ENCODE measurements at regions of chr1 and their contacts with region 1.

Region 1: GRCh38 chr1:19704247-19705113 is 39.8 kb downstream of the HTR6 start:
- DNase-seq: peak; percentile 67 to 79
- H3K4me3 ChIP-seq: no peak overlapping the region
- H3K4me3 Mint-ChIP-seq: no peak overlapping the region
- H3K27ac Mint-ChIP-seq: no peak overlapping the region
- H3K4me1 ChIP-seq: no peaks in the 10 kb centered on the region
- H3K4me1 Mint-ChIP-seq: no peaks in the 10 kb centered on the region
- H3K27me3 ChIP-seq: no peaks in the 10 kb centered on the region
- H3K27me3 Mint-ChIP-seq: no peaks in the 10 kb centered on the region
- CTCF ChIP-seq: peak; percentile 82 to 83

Region 2: DNA sequence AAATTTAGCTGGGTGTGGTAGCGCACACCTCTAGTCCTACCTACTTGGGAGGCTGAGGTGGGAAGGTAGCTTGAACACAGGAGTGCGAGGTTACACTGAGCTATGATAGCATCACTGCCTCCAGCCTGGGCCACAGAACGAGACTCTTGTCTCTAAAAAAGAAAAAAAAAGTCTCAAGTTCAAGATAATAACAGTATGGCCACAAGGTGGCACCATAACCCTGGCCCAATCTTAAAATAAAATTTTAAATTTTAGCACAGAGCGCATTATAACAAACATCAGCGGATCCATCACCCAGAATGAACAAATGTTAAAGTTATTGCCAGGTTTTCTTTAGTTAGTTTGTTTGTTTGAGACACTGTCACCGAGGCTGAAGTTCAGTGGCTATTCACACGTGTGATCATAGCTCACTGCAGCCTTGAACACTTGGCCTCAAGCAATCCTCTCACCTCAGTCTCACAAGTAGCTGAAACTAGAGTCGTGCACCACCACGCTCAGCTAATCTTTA is 42.7 kb before region 1 on chr1:
- CTCF ChIA-PET with region 1: interaction called, 36 read pairs
- POLR2A ChIA-PET with region 1: no interaction called
- intact Hi-C with region 1: loop called (anchors 1 kb)
- DNase-seq: no peak
- H3K4me3 ChIP-seq: no peak overlapping the region
- H3K4me3 Mint-ChIP-seq: no peak overlapping the region
- H3K27ac Mint-ChIP-seq: no peak overlapping the region
- H3K4me1 ChIP-seq: no peaks in the 10 kb centered on the region
- H3K4me1 Mint-ChIP-seq: peaks cover 6% of the 10 kb centered on the region
- H3K27me3 ChIP-seq: no peaks in the 10 kb centered on the region; the same call in 1 of the 2 replicates
- H3K27me3 Mint-ChIP-seq: peaks cover 11% of the 10 kb centered on the region
- CTCF ChIP-seq: peak; percentile 52 to 65

Region 3: DNA sequence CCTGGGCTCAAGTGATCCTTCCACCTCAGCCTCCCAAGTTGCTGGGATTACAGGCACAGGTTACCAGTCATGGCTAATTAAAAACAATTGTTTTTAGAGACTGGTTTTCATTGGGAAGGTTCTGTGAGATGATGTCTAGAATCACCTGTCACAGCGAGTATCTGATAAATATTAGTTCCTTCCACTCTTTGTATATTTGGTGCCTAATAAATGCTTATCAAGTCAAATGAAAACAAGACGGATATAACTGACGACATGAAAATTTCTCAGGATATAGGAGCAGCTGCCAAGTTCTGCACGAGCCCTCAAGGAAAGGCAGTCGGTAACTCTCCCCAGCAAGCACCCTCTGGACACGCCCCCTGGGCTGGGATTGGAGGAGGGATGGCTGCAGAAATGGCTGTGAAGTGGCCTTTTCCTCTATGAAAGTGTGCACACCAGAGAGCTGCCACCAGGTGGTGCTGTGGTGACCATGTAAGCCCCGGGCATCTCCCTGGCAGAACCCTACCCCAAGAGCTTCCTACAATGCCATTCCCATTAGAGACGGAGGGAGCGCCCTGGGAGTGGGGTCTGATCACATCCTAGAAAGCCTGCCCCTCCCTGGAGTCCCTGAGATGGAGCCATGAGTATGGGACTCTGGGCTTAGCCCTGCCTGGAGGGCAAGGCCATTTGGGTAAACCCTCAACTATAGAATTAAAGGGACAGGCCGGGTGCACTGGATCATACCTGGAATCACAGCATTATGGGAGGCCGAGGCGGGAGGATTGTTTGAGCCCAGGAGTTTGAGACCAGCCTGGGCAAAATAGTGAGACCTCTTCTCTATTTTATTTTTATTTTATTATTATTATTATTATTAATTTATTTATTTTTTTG is 11.1 kb after region 1 on chr1:
- CTCF ChIA-PET with region 1: interaction called, 17 read pairs
- POLR2A ChIA-PET with region 1: no interaction called
- intact Hi-C with region 1: no loop called
- DNase-seq: peak; percentile 88 to 90
- H3K4me3 ChIP-seq: no peak overlapping the region
- H3K4me3 Mint-ChIP-seq: no peak overlapping the region
- H3K27ac Mint-ChIP-seq: no peak overlapping the region
- H3K4me1 ChIP-seq: peaks cover 5% of the 10 kb centered on the region; the same call in 1 of the 2 replicates
- H3K4me1 Mint-ChIP-seq: no peaks in the 10 kb centered on the region
- H3K27me3 ChIP-seq: no peaks in the 10 kb centered on the region
- H3K27me3 Mint-ChIP-seq: no peaks in the 10 kb centered on the region
- CTCF ChIP-seq: peak; percentile 60 to 72

Region 4: GRCh38 chr1:19844731-19845495 is 140.4 kb after region 1 on chr1:
- CTCF ChIA-PET with region 1: no interaction called
- POLR2A ChIA-PET with region 1: no interaction called
- intact Hi-C with region 1: no loop called
- DNase-seq: no peak
- H3K4me3 ChIP-seq: no peak overlapping the region
- H3K4me3 Mint-ChIP-seq: no peak overlapping the region
- H3K27ac Mint-ChIP-seq: no peak overlapping the region
- H3K4me1 ChIP-seq: no peaks in the 10 kb centered on the region
- H3K4me1 Mint-ChIP-seq: no peaks in the 10 kb centered on the region
- H3K27me3 ChIP-seq: no peaks in the 10 kb centered on the region
- H3K27me3 Mint-ChIP-seq: no peaks in the 10 kb centered on the region
- CTCF ChIP-seq: no peak

Measured in Caco-2 (cell line).